ENCODE measurements at regions of chr9 and their contacts with region 1.

Region 1: DNA sequence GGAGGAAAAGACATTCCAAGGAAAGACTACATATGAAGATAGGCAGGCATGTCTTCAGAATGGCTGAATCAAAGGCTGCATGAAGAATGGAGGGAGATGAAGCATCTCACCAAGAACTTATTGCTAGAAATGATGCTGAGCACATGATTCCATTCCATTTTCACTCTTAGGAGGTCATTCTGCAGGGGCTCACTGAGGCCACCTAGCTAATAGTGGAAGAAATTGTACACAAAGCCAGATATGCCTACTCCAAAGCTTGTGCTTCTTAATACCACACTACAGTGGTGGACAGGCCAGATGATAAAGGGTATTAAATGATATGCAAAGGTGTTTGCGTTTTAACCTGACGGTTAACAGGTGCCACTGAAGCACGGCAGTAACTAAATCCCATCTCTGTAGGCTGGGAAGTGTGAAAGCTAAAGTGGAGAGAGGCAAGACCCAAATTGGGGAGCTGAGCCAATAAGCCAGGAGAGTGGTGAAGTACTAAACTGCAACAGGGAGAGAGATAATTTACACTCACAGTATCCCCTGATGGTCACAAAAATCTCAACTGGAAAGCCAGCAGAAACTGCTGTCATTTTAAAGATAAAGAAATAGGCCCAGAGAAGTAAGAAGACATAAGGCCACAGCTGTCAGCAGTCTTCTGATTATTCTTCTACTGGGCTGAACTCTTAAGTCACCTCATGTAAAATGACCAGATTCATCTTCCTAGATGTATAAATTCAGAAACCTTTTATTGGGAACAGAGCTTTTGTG is 14.6 kb downstream of the NDUFA8 start:
- DNase-seq: peak; percentile 15
- ATAC-seq: peak; percentile 23; the same call in 1 of the 2 replicates
- H3K4me3 ChIP-seq: no peak overlapping the region
- H3K27ac ChIP-seq: no peak overlapping the region
- H3K4me1 ChIP-seq: peaks cover 15% of the 10 kb centered on the region
- H3K27me3 ChIP-seq: no peaks in the 10 kb centered on the region
- CTCF ChIP-seq: peak; percentile 59

Region 2: GRCh38 chr9:122190609-122191381 is 45.8 kb after region 1 on chr9:
- CTCF ChIA-PET with region 1: no interaction called
- POLR2A ChIA-PET with region 1: no interaction called
- intact Hi-C with region 1: loop called (anchors 5 kb)
- DNase-seq: peak; percentile 88
- ATAC-seq: peak; percentile 92
- H3K4me3 ChIP-seq: no peak overlapping the region
- H3K27ac ChIP-seq: peak overlapping the region; percentile 74
- H3K4me1 ChIP-seq: peaks cover 17% of the 10 kb centered on the region
- H3K27me3 ChIP-seq: no peaks in the 10 kb centered on the region
- CTCF ChIP-seq: no peak